Mammary epithelial cell (primary cell): ENCODE measurements at regions of chr10 and their contacts with region 1.

Region 1: GRCh38 chr10:101189541-101190401 is 39.5 kb downstream of the LBX1 start:
- DNase-seq: no peak
- H3K4me3 ChIP-seq: no peak overlapping the region
- H3K27ac ChIP-seq: no peak overlapping the region
- H3K4me1 ChIP-seq: peaks cover 3% of the 10 kb centered on the region
- H3K27me3 ChIP-seq: no peaks in the 10 kb centered on the region
- CTCF ChIP-seq: no peak

Region 2: GRCh38 chr10:101244321-101245050 is 54.7 kb after region 1 on chr10:
- CTCF ChIA-PET with region 1: no interaction called
- dilution Hi-C with region 1: loop called (anchors 5 kb)
- in situ Hi-C with region 1: no loop called
- intact Hi-C with region 1: no loop called
- DNase-seq: no peak
- H3K4me3 ChIP-seq: no peak overlapping the region
- H3K27ac ChIP-seq: no peak overlapping the region
- H3K4me1 ChIP-seq: no peaks in the 10 kb centered on the region
- H3K27me3 ChIP-seq: peaks cover 5% of the 10 kb centered on the region
- CTCF ChIP-seq: no peak